ENCODE measurements at regions of chr10 and their contacts with region 1.

Region 1: GRCh38 chr10:93503075-93503474 is 6.7 kb downstream of the CEP55 start:
- DNase-seq: no peak
- H3K4me3 ChIP-seq: no peak overlapping the region
- H3K27ac ChIP-seq: no peak overlapping the region
- H3K4me1 ChIP-seq: peaks cover 6% of the 10 kb centered on the region; the same call in 1 of the 2 replicates
- H3K27me3 ChIP-seq: no peaks in the 10 kb centered on the region

Region 2: DNA sequence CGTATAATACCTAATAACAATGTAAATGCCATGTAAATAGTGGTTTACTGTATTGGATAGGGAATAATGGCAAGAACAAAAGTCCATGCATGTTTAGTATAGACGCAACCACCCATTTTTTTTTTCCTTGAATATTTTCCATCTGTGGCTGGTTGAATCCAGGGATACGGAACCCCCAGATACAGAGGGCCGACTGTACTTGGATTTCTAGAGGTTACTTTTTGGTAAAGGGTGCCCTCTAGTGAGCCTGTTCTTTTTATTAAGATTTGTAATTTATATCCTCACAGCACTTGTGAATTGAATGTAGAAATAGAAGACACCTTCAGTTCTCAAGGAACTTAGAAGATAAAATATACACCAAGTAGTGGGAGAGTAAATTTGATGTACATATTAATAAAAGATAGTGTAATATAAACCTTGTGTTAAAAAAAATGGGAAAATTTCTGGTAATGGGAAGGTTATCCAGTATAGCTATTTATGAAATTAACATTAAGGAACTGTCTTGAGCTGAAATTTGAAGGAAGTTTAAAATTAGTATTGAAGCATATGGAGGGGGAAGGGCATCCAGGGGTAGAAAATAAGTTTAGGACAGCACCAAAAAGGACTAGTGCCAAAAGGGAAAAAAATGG is 622.7 kb before region 1 on chr10:
- in situ Hi-C with region 1: loop called (anchors 25 kb)
- DNase-seq: peak; percentile 66
- H3K4me3 ChIP-seq: no peak overlapping the region
- H3K27ac ChIP-seq: no peak overlapping the region
- H3K4me1 ChIP-seq: 0 out of 2 replicates have a peak, but pooled peaks cover 3% of the 10 kb centered on the region
- H3K27me3 ChIP-seq: no peaks in the 10 kb centered on the region

Region 3: DNA sequence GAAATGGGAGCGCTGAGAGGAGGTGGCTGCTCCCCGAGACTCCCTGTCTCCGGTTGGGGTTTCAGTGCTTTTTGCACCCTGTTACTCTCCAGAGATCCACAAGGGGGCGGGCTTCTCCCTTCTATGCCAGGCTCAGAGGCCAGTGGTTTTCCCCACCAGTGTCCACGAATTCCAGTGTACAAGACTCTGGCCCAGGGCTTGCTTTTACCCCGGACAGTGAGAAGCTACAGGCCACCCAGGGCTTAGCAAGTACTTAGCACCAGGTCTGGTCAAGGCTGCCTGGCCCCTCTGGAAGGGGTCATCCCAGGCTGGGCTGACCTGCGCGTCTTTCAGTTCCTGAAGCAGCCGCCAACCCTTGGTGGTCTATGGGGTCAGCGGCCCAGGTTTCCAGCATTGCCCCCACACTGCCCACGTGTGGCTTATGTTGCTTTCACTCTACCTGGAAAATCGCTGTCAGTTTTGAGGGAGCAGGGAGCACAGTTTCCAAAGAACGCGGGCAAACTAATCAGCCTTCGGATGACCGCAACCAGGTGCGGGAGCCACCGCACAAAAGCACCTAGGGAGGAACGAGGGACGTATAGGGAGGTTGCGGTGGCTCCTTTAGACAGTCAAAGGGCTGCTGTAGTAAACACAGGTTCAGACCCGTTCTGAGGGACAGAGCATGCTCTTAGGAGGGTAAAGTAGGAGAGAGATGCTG is 422.6 kb before region 1 on chr10:
- in situ Hi-C with region 1: loop called (anchors 25 kb)
- DNase-seq: peak; percentile 66
- H3K4me3 ChIP-seq: peak overlapping the region; percentile 53
- H3K27ac ChIP-seq: no peak overlapping the region
- H3K4me1 ChIP-seq: peaks cover 3% of the 10 kb centered on the region; the same call in 1 of the 2 replicates
- H3K27me3 ChIP-seq: peaks cover 25% of the 10 kb centered on the region

Measured in GM23248 (cell line).